A549 (cell line): ENCODE measurements at regions of chr7 and their contacts with region 1.

Region 1: GRCh38 chr7:140003913-140004382 is 58.8 kb downstream of the PARP12 start:
- DNase-seq: peak; percentile 63 to 80
- ATAC-seq: peak; percentile 64 to 74; a peak in 5 of 6 replicates
- H3K4me3 ChIP-seq: no peak overlapping the region
- H3K27ac ChIP-seq: no peak overlapping the region
- H3K4me1 ChIP-seq: no peaks in the 10 kb centered on the region
- CTCF ChIP-seq: peak; percentile 79
- EP300 ChIP-seq: no peak
- POLR2A ChIP-seq: no peak
- RAD21 ChIP-seq: peak; percentile 84 to 86

Region 2: GRCh38 chr7:139582671-139583155 is 421.2 kb before region 1 on chr7:
- CTCF ChIA-PET with region 1: interaction called, 16 read pairs
- POLR2A ChIA-PET with region 1: no interaction called
- DNase-seq: no peak
- ATAC-seq: no peak
- H3K4me3 ChIP-seq: no peak overlapping the region
- H3K27ac ChIP-seq: no peak overlapping the region
- H3K4me1 ChIP-seq: no peaks in the 10 kb centered on the region
- CTCF ChIP-seq: no peak
- EP300 ChIP-seq: no peak
- POLR2A ChIP-seq: no peak
- RAD21 ChIP-seq: no peak

Region 3: DNA sequence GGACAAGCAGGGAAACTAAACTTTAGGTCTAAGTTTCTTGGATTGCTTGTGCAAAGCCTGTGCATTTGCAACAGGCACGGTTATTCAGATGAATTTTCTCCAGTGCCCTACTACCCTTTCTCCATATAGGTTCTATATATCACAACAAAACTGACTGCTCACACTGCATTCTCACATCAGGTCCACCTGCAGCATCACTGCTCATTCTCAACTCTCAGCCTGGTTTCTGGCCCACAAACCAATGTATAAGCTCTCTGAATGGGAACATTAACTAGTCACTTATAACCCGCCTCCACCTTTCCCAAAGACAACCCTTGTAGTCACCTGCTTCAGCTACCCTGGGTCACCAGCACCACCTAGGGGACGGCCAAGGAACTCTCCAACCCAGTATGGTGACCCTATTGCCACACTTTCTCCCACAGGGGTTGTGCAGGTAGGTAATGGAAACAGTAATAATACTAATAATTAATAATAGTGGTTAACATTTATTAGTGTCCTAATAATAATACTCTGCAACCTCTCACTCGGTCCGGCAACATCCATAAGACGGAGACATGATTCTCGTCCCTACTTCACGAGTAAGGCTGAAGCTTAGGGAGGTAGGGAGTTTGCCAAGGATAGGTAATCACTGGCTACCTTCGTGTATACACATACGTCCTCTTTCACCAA is 383.1 kb before region 1 on chr7:
- CTCF ChIA-PET with region 1: interaction called, 167 read pairs
- POLR2A ChIA-PET with region 1: no interaction called
- DNase-seq: peak; percentile 48 to 65
- ATAC-seq: peak; percentile 76 to 90
- H3K4me3 ChIP-seq: no peak overlapping the region
- H3K27ac ChIP-seq: no peak overlapping the region
- H3K4me1 ChIP-seq: peaks cover 7% of the 10 kb centered on the region; the same call in 1 of the 3 replicates
- CTCF ChIP-seq: peak; percentile 60
- EP300 ChIP-seq: no peak
- POLR2A ChIP-seq: no peak
- RAD21 ChIP-seq: peak; percentile 58 to 66

Region 4: DNA sequence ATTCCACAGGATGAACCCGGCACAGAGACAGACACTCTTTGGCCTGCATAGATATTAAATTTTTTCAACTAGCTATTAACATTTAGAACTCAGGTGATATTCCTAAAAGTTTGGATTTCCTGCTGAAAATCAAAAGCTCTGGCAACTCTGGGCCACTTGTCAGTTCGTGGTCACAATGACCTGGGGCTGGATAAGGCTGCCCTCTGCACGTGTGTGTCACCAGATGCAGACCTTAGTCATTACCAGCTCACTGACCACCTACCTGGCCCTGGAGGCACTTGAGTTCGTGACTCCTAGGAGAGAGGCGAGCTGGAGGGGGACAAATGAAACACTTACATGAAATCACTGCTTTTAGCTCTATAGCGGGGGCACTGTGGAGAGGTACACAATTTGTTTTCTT is 352.6 kb before region 1 on chr7:
- CTCF ChIA-PET with region 1: interaction called, 311 read pairs
- POLR2A ChIA-PET with region 1: no interaction called
- DNase-seq: no peak
- ATAC-seq: no peak
- H3K4me3 ChIP-seq: no peak overlapping the region
- H3K27ac ChIP-seq: peak overlapping the region; percentile 22 to 46; a peak in 3 of 6 replicates
- H3K4me1 ChIP-seq: peaks cover 66% of the 10 kb centered on the region
- CTCF ChIP-seq: no peak
- EP300 ChIP-seq: no peak
- POLR2A ChIP-seq: no peak
- RAD21 ChIP-seq: no peak

Region 5: DNA sequence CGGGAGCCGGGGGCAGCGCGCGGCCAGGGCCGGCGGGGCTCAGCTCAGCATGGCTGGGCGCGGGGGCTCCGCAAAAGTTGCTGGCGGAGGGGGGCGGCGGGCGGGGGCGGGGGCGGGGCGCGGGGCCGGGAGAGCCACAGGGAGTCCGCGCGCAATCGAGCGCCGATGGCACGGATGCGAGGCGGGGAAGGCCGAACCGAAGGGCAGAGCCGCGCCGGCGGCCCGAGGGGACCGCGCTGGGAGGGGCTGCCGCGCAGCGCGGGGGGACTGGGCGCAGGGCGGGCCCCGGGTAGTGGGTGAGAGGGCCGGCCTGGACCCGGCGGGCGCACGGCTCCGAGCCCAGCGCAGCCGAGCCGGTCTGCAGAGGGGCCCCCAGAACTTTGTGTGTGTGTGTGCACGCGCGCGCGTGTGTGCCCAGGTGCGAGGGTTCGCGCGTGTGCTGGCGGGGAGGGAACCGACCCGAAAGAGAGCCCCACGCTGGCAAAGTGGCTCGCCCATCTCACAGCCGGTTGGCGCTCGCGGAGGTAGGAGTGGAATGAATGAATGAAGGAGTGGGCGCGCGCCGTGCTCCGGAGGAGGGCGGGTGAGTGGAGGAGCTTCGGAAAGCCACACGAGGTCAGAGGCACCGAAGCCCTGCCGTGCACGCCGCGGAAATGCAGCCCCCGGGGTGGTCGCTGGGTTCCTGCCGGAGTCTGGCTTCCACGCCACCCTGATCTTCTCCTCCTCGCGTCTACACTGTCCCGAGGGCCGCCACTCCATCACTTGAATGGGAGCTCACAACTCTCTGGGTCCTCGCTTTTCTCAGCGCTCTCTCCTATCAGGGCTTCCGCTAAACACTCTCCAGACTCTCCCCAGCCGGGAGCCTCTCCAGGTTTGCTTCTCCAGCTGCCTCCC is 225.8 kb before region 1 on chr7 and contains the start of gene HIPK2:
- CTCF ChIA-PET with region 1: interaction called, 31 read pairs
- POLR2A ChIA-PET with region 1: no interaction called
- DNase-seq: peak; percentile 65 to 76
- ATAC-seq: peak; percentile 72 to 76
- H3K4me3 ChIP-seq: peak within 1 kb of the TSS; percentile 99
- H3K27ac ChIP-seq: peak within 1 kb of the TSS; percentile 97 to 100
- H3K4me1 ChIP-seq: peaks cover 31% of the 10 kb centered on the region
- CTCF ChIP-seq: no peak
- EP300 ChIP-seq: no peak
- POLR2A ChIP-seq: peak; percentile 24
- RAD21 ChIP-seq: no peak; a peak in 2 of 5 replicates
- polyA plus RNA-seq, gene HIPK2: 12.1 and 16.3 TPM in 2 replicates

Region 6: GRCh38 chr7:139875821-139876241 is 128.1 kb before region 1 on chr7:
- CTCF ChIA-PET with region 1: no interaction called
- POLR2A ChIA-PET with region 1: no interaction called
- DNase-seq: peak in 1 of 2 experiments; percentile 14
- ATAC-seq: peak; percentile 47 to 53; a peak in 4 of 6 replicates
- H3K4me3 ChIP-seq: no peak overlapping the region
- H3K27ac ChIP-seq: peak overlapping the region in 1 of 2 experiments; percentile 32; a peak in 2 of 6 replicates
- H3K4me1 ChIP-seq: peaks cover 9% of the 10 kb centered on the region; the same call in 1 of the 3 replicates
- CTCF ChIP-seq: no peak
- EP300 ChIP-seq: no peak
- POLR2A ChIP-seq: no peak
- RAD21 ChIP-seq: no peak

Region 7: GRCh38 chr7:140017543-140017942 is 13.6 kb after region 1 on chr7:
- CTCF ChIA-PET with region 1: interaction called, 14 read pairs
- POLR2A ChIA-PET with region 1: no interaction called
- DNase-seq: no peak
- ATAC-seq: peak in 1 of 2 experiments; percentile 37; a peak in 1 of 6 replicates
- H3K4me3 ChIP-seq: no peak overlapping the region
- H3K27ac ChIP-seq: no peak overlapping the region
- H3K4me1 ChIP-seq: no peaks in the 10 kb centered on the region
- CTCF ChIP-seq: no peak
- EP300 ChIP-seq: no peak
- POLR2A ChIP-seq: no peak
- RAD21 ChIP-seq: no peak